ENCODE measurements at regions of chr18 and their contacts with region 1.

Region 1: DNA sequence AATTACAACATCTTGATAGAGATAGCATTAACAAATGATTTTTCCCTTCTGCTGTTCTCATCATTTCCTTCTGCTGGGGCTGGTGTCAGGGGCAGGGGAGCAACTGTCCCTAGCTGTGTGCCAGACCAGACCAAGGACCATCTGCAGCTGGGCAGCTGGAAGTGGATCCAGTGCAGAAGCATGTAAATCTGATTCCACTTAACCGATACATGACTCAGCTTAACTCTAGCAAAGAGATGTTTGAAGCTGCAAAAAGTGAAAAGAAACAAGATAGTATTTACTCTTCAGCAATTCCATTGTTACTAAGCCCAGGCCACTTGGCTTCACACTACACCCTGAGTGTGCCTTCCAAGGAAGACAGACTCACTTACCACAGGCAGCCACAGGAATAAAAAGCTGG is 151.1 kb downstream of the GALNT1 start:
- DNase-seq: no peak
- ATAC-seq: no peak
- H3K4me3 ChIP-seq: no peak overlapping the region
- H3K27ac ChIP-seq: no peak overlapping the region
- H3K4me1 ChIP-seq: no peaks in the 10 kb centered on the region
- CTCF ChIP-seq: no peak
- EP300 ChIP-seq: no peak
- POLR2A ChIP-seq: no peak
- RAD21 ChIP-seq: no peak

Region 2: GRCh38 chr18:35605686-35606417 is 126.8 kb before region 1 on chr18:
- CTCF ChIA-PET with region 1: no interaction called
- POLR2A ChIA-PET with region 1: no interaction called
- DNase-seq: no peak
- ATAC-seq: no peak
- H3K4me3 ChIP-seq: no peak overlapping the region
- H3K27ac ChIP-seq: no peak overlapping the region
- H3K4me1 ChIP-seq: peaks cover 43% of the 10 kb centered on the region
- CTCF ChIP-seq: no peak
- EP300 ChIP-seq: no peak
- POLR2A ChIP-seq: no peak
- RAD21 ChIP-seq: no peak

Region 3: GRCh38 chr18:35756506-35757117 is 24.0 kb after region 1 on chr18:
- CTCF ChIA-PET with region 1: interaction called, 11 read pairs
- POLR2A ChIA-PET with region 1: no interaction called
- DNase-seq: peak; percentile 16 to 40
- ATAC-seq: peak; percentile 76 to 87; a peak in 5 of 6 replicates
- H3K4me3 ChIP-seq: no peak overlapping the region
- H3K27ac ChIP-seq: no peak overlapping the region
- H3K4me1 ChIP-seq: no peaks in the 10 kb centered on the region
- CTCF ChIP-seq: peak; percentile 73
- EP300 ChIP-seq: no peak
- POLR2A ChIP-seq: no peak
- RAD21 ChIP-seq: peak; percentile 79 to 81